ENCODE measurements at regions of chr5 and their contacts with region 1.

Region 1: GRCh38 chr5:172479044-172479783 is 24.9 kb upstream of the SH3PXD2B start:
- DNase-seq: peak; percentile 79 to 93 (median 83)
- ATAC-seq: peak; percentile 100
- H3K4me3 ChIP-seq: no peak overlapping the region
- H3K27ac ChIP-seq: no peak overlapping the region
- H3K4me1 ChIP-seq: no peaks in the 10 kb centered on the region
- H3K27me3 ChIP-seq: no peaks in the 10 kb centered on the region
- CTCF ChIP-seq: peak; percentile 62 to 79

Region 2: DNA sequence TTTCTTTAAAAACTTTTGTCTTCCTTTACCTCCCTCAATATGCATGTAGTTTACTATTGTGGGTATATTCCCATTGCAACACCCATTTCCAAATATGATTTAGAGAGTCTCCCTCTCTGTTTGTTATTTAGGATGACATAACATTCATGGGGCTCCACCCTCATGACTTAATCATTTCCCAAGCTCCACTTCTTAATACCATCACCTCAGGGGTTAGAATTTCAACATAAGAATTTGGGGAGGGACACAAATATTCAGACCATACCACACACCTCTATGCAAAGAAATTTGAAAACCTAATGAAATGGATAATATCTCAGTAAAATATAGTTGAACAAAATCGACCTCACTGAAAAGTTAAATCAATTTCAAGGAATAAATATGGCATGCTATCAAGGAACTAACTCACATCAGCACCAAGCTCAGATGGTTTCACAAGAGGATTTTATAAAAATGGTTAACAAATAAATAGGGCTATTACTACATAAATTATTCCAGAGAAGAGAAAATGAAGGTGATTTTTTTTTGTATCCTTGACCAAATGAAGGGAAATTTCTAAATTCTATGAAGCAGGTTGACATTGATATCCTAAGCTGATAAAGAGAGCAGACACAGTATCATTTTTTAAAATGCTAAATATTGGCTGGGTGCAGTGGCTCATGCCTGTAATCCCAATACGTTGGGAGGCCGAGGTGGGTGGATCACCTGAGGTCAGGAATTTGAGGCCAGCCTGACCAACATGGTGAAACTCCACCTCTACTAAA is 175.5 kb before region 1 on chr5:
- intact Hi-C with region 1: no loop called
- DNase-seq: no peak
- ATAC-seq: no peak
- H3K4me3 ChIP-seq: no peak overlapping the region
- H3K27ac ChIP-seq: no peak overlapping the region
- H3K4me1 ChIP-seq: no peaks in the 10 kb centered on the region
- H3K27me3 ChIP-seq: no peaks in the 10 kb centered on the region
- CTCF ChIP-seq: no peak

Region 3: DNA sequence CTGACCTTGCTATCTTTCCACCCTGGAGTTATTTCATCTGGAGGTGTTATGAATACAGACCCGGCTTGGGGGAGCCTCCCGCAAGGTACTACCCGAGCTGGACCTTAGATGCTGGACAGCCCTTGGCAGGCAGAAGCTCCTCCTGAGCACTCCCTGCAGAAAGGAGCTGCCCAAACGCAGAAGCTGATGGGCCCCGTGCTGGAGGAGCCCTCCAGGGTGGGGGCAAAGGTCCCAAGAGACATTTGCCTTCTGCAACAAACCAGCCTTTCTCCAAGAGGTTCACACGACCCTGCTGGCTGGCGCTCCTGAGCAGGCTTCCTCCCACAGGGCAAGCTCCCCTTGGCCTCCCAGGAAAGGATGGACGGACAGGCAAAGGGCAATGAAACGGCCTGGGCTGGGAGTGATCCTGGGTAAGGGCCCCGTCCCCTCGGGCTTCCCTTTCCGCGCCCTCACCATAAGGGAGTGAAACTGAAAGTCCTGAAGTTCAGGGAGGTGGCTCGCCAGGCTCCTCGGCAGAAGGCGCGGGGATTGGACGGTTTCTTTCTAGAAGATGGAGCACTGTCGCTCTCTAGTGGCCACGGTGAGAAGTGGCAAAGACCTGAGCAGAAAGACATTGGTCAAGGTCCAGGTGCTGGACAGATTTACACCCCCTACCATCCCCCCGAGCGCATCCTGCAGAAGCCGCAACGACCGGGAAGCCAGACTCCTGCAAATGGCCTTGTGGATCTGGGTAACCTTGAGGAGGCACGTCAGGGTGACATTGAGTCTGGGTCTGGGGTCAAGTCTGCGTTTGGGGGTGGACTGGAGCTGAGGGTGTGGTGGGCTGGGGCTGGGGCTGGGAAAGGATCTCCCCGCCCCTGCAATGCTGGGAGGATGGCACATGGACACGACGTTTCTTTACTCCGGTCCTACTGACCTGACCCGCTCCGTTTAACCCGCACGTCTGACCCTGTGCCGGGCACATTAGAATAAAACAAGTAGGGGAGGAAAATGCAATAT is 218.2 kb after region 1 on chr5:
- intact Hi-C with region 1: loop called (anchors 5 to 10 kb)
- DNase-seq: peak; percentile 86 to 93 (median 92)
- ATAC-seq: peak; percentile 90
- H3K4me3 ChIP-seq: peak overlapping the region; percentile 53 to 62
- H3K27ac ChIP-seq: peak overlapping the region; percentile 70 to 81
- H3K4me1 ChIP-seq: peaks cover 10 to 20% of the 10 kb centered on the region in 2 donors
- H3K27me3 ChIP-seq: peaks cover 0 to 12% of the 10 kb centered on the region in 2 donors
- CTCF ChIP-seq: peak; percentile 81 to 89

Region 4: GRCh38 chr5:172707285-172708182 is 228.3 kb after region 1 on chr5:
- intact Hi-C with region 1: loop called in 1 of 2 experiments (anchors 10 kb)
- DNase-seq: peak in 1 of 4 donors; percentile 75
- ATAC-seq: peak; percentile 77
- H3K4me3 ChIP-seq: no peak overlapping the region
- H3K27ac ChIP-seq: no peak overlapping the region
- H3K4me1 ChIP-seq: no peaks in the 10 kb centered on the region
- H3K27me3 ChIP-seq: peaks cover 0 to 5% of the 10 kb centered on the region in 2 donors
- CTCF ChIP-seq: peak; percentile 16 to 17

Region 5: GRCh38 chr5:172932313-172933017 is 453.3 kb after region 1 on chr5:
- intact Hi-C with region 1: loop called in 1 of 2 experiments (anchors 10 kb)
- DNase-seq: peak; percentile 37 to 96 (median 70)
- ATAC-seq: peak; percentile 98
- H3K4me3 ChIP-seq: no peak overlapping the region
- H3K27ac ChIP-seq: peak overlapping the region; percentile 34 to 57
- H3K4me1 ChIP-seq: peaks cover 5 to 24% of the 10 kb centered on the region in 2 donors
- H3K27me3 ChIP-seq: no peaks in the 10 kb centered on the region
- CTCF ChIP-seq: peak; percentile 91

Measured in left lung (tissue), 14 donors.